ENCODE measurements at regions of chr2 and their contacts with region 1.

Region 1: GRCh38 chr2:119174216-119175037 is 15.9 kb upstream of the C1QL2 start:
- DNase-seq: peak in 1 of 2 experiments; percentile 91
- H3K4me3 ChIP-seq: no peak overlapping the region
- H3K27ac ChIP-seq: no peak overlapping the region
- H3K4me1 ChIP-seq: no peaks in the 10 kb centered on the region; a peak in 1 of 7 replicates
- H3K27me3 ChIP-seq: no peaks in the 10 kb centered on the region
- CTCF ChIP-seq: peak; percentile 87 to 92 (median 88)
- EP300 ChIP-seq: no peak
- POLR2A ChIP-seq: no peak
- RAD21 ChIP-seq: peak; percentile 66 to 81

Region 2: DNA sequence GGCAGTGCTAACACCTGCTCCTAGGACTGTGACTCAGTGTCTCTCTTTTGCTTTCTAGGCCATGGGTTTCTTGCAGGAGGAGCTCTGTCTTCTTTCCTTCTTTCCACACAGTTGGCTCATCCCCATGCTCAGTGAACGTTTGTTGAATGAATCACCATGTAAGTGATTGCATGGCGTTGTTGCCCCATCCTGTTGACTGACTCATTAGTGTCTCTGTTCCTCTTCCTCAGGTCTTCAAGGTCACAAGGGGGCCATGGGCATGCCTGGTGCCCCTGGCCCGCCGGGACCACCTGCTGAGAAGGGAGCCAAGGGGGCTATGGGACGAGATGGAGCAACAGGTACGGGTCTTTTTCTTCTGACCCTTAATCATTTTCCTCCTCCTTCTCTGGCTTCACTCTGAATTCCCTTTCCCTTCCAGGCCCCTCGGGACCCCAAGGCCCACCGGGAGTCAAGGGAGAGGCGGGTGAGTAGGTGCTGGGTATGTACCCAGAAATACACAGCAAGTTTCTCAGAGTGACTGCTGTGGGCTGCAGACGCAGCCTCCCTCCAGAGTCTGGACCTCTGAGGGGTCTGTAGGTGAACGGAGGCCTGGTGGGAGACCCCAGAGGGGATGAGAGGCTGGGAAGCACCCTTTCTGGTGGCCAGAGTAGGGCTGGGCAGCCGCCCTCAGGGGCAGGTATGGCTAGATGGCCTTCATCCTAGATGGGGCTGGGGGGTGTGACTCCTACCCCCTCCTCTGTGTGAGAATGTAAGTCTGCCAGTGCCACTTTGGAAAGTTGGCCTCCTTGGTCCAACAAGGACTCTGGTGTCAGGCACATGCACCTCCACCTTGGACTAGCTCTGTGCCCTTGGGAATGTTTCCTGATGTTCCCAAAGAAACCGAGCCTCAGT is 200.1 kb before region 1 on chr2:
- CTCF ChIA-PET with region 1: no interaction called
- POLR2A ChIA-PET with region 1: no interaction called
- DNase-seq: peak in 1 of 2 experiments; percentile 31
- H3K4me3 ChIP-seq: no peak overlapping the region
- H3K27ac ChIP-seq: no peak overlapping the region
- H3K4me1 ChIP-seq: peaks cover 0 to 2% (median 0%) of the 10 kb centered on the region in 4 experiments; a peak in 1 of 7 replicates
- H3K27me3 ChIP-seq: peaks cover 0 to 12% (median 2%) of the 10 kb centered on the region in 4 experiments; a peak in 2 of 7 replicates
- CTCF ChIP-seq: no peak
- EP300 ChIP-seq: no peak
- POLR2A ChIP-seq: no peak
- RAD21 ChIP-seq: no peak

Region 3: GRCh38 chr2:119028327-119029174 is 145.9 kb before region 1 on chr2:
- CTCF ChIA-PET with region 1: interaction called, 23 read pairs
- POLR2A ChIA-PET with region 1: no interaction called
- DNase-seq: peak in 1 of 2 experiments; percentile 84
- H3K4me3 ChIP-seq: no peak overlapping the region
- H3K27ac ChIP-seq: no peak overlapping the region
- H3K4me1 ChIP-seq: no peaks in the 10 kb centered on the region; a peak in 1 of 7 replicates
- H3K27me3 ChIP-seq: no peaks in the 10 kb centered on the region
- CTCF ChIP-seq: peak; percentile 59 to 78 (median 62)
- EP300 ChIP-seq: no peak
- POLR2A ChIP-seq: no peak
- RAD21 ChIP-seq: peak; percentile 66 to 81

Region 4: GRCh38 chr2:119136093-119136492 is 38.3 kb before region 1 on chr2:
- CTCF ChIA-PET with region 1: interaction called, 10 read pairs
- POLR2A ChIA-PET with region 1: no interaction called
- DNase-seq: no peak
- H3K4me3 ChIP-seq: no peak overlapping the region
- H3K27ac ChIP-seq: no peak overlapping the region
- H3K4me1 ChIP-seq: peaks cover 0 to 6% (median 0%) of the 10 kb centered on the region in 4 experiments; a peak in 2 of 7 replicates
- H3K27me3 ChIP-seq: no peaks in the 10 kb centered on the region
- CTCF ChIP-seq: no peak
- EP300 ChIP-seq: no peak
- POLR2A ChIP-seq: no peak
- RAD21 ChIP-seq: no peak

Region 5: GRCh38 chr2:119158563-119159347 is 15.7 kb before region 1 on chr2 and contains the start of gene C1QL2:
- CTCF ChIA-PET with region 1: interaction called, 59 read pairs
- POLR2A ChIA-PET with region 1: no interaction called
- DNase-seq: peak in 1 of 2 experiments; percentile 74
- H3K4me3 ChIP-seq: peak within 1 kb of the TSS; percentile 61 to 73 (median 68)
- H3K27ac ChIP-seq: no peak within 1 kb of the TSS
- H3K4me1 ChIP-seq: peaks cover 4 to 25% (median 18%) of the 10 kb centered on the region in 4 experiments
- H3K27me3 ChIP-seq: peaks cover 29 to 41% (median 38%) of the 10 kb centered on the region in 4 experiments
- CTCF ChIP-seq: peak; percentile 46 to 56 (median 48)
- EP300 ChIP-seq: no peak
- POLR2A ChIP-seq: no peak
- RAD21 ChIP-seq: peak; percentile 28 to 53; a peak in 3 of 4 replicates
- total RNA-seq, gene C1QL2: 0.88 and 1.1 TPM in 2 replicates

Region 6: GRCh38 chr2:119190722-119191121 is 16.3 kb after region 1 on chr2:
- CTCF ChIA-PET with region 1: interaction called, 25 read pairs
- POLR2A ChIA-PET with region 1: interaction called, 3 read pairs
- DNase-seq: no peak
- H3K4me3 ChIP-seq: no peak overlapping the region
- H3K27ac ChIP-seq: no peak overlapping the region
- H3K4me1 ChIP-seq: no peaks in the 10 kb centered on the region; a peak in 1 of 7 replicates
- H3K27me3 ChIP-seq: no peaks in the 10 kb centered on the region; a peak in 1 of 7 replicates
- CTCF ChIP-seq: no peak
- EP300 ChIP-seq: no peak
- POLR2A ChIP-seq: no peak
- RAD21 ChIP-seq: no peak